Activated naive CD4-positive, alpha-beta T cell treated with anti-CD3 and anti-CD28 coated beads, Interleukin-2, amount 10 ng/mL, durations not matched to agents 7 days and 5 days (primary cell): ENCODE measurements at regions of chr12 and their contacts with region 1.

Region 1: DNA sequence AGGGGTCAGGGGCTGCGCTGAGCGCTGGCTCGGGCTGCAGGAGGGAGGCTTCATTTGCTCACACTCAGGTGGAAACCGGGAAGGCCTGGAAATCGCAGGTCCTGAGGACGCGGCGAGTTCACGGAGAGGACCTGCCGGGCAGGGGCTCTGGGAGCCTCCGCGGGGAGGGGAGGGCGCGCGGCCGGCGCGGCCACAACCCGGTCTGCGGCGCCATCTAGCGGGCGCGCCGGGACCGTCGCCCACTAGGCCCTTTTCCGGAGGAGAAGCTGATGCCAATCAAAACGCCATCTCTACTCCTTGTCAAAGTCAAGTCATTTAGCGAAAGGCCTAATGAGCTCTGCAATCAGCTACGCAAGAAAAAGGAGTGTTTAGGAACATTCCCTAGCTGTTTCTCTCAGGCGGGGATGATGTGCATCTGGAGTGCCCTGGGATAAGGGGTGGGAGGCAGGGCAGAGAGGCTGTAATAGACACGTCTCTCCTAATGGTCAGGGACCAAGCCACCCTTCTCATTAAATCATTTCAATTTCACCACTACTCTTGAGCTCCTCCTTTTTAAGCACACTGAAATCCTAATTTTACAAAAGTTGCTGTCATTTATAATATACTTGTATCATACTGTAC is 885.8 kb upstream of the TMEM132C start:
- DNase-seq: peak; percentile 50
- H3K4me3 Mint-ChIP-seq: no peak overlapping the region
- H3K27ac Mint-ChIP-seq: no peak overlapping the region
- H3K4me1 Mint-ChIP-seq: no peaks in the 10 kb centered on the region
- H3K27me3 Mint-ChIP-seq: no peaks in the 10 kb centered on the region

Region 2: GRCh38 chr12:127191129-127191528 is 190.0 kb before region 1 on chr12:
- CTCF ChIA-PET with region 1: no interaction called
- DNase-seq: no peak
- H3K4me3 Mint-ChIP-seq: no peak overlapping the region
- H3K27ac Mint-ChIP-seq: no peak overlapping the region
- H3K4me1 Mint-ChIP-seq: no peaks in the 10 kb centered on the region
- H3K27me3 Mint-ChIP-seq: no peaks in the 10 kb centered on the region

Region 3: DNA sequence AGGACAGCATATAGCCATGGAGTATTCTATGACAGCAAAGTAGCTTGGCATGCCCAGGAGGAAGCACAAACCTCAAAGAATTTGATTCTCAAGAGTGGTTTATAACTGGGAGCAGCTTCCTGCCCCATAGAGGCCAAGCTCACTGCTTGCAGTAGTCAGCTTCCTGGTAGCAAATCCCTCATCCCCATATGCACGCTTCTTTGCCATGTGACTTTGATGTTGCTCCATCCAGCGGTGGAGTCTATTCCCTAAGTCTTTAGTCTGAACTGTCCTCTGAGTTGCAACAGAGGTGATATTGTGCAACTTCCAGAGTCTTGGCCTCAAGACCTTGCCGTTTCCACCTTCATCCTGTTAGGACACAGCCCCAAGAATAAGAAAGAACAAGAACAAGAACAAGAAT is 111.0 kb before region 1 on chr12:
- CTCF ChIA-PET with region 1: no interaction called
- DNase-seq: no peak
- H3K4me3 Mint-ChIP-seq: no peak overlapping the region
- H3K27ac Mint-ChIP-seq: no peak overlapping the region
- H3K4me1 Mint-ChIP-seq: no peaks in the 10 kb centered on the region
- H3K27me3 Mint-ChIP-seq: no peaks in the 10 kb centered on the region

Region 4: DNA sequence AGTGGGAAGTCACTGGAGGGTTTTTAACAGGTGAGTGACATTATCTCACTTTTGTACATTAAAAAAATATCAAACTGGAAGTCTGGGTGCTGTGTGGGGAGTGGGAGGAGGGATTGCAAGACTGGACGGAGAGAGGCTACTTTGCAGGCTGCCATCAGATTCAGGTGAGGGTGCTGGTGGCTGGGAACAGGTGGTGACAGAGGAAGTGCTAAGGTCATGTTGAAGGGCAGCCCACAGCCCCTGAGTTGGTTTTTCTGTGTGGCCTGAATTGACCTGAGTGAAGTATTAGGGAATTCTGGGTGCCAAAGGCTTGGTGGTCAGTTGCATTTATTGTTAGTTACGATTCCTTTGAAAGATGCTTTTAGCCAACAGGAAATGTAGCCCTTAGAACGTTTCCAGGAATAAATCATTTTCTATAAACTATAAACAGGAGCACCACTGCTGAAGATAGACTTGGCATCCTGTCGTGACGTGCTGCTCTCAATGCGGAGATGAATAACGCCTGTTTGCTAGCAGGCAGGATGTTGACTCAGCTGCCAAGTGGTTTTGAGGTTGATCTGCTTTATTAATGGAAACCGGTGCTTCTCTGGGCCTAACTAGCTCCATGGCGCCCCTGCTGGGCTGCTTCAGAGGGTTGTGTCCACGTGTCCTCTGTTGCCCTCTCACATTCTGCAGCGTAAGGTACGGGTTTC is 178.3 kb after region 1 on chr12:
- CTCF ChIA-PET with region 1: interaction called, 12 read pairs
- DNase-seq: peak; percentile 91
- H3K4me3 Mint-ChIP-seq: peak overlapping the region; percentile 41
- H3K27ac Mint-ChIP-seq: peak overlapping the region; percentile 99
- H3K4me1 Mint-ChIP-seq: peaks cover 61% of the 10 kb centered on the region
- H3K27me3 Mint-ChIP-seq: peaks cover 8% of the 10 kb centered on the region

Region 5: GRCh38 chr12:127588249-127588648 is 207.1 kb after region 1 on chr12:
- CTCF ChIA-PET with region 1: no interaction called
- DNase-seq: no peak
- H3K4me3 Mint-ChIP-seq: no peak overlapping the region
- H3K27ac Mint-ChIP-seq: no peak overlapping the region
- H3K4me1 Mint-ChIP-seq: no peaks in the 10 kb centered on the region
- H3K27me3 Mint-ChIP-seq: no peaks in the 10 kb centered on the region